ENCODE measurements at regions of chr7 and their contacts with region 1.

Region 1: GRCh38 chr7:70953331-70953741 is 178.6 kb upstream of the GALNT17 start:
- DNase-seq: no peak

Region 2: DNA sequence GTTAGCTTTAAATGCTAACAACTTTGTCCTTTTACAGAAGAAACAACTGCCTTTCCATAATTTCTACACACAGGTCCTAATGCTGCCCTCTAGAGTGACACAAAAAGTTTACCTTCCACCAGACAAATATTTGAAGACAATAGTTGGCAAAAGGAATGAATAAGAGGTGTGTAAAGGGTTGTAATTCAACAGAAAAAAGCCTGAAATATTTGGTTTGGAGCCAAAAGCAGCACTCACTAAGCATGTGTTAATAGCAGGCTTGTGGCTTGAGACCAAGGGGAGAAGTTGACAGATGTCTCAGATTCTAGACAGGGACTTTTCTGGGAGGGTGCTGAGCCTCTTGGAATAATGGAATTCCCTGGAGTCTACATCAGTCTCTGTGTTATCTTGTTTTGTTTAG is 22.4 kb after region 1 on chr7:
- intact Hi-C with region 1: loop called (anchors 1 kb)
- DNase-seq: no peak

Region 3: GRCh38 chr7:72127136-72127535 is 1173.8 kb after region 1 on chr7:
- intact Hi-C with region 1: no loop called
- DNase-seq: no peak